Transverse colon (tissue), 4 donors: ENCODE measurements at regions of chr12 and their contacts with region 1.

Region 1: DNA sequence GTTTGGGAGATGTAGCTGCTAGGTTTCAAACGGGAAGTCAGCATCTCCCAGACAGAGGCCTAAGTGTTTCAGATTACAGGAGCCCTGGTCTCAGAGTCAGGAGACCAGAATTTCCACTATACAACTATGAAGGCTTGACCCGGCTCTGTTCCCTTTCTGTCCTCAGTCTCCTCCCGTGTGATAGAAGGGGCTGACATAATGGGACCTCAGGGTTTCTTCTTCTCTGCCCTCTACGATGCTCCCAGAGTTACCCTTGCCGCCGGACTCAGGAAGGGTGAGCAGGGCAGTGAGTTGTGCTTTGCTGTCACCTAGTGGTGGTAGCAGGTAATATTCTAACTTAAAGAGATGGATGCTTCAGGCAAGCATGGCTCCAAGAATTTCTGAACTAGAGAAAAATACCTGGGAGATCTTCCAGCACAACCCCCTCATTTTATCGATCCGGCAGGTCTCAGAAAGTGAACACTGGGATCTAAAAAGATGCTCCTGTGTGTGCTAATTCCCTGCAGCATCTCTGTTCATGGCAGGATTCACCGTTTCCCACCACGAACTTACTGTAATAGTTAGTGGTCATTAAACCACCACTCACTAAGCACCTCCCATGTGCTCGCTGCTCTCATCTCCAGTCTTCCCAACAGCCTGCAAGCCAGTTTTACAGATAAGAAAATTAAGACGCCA is 84.4 kb downstream of the VWF start:
- DNase-seq: peak; percentile 49
- H3K4me3 ChIP-seq: no peak overlapping the region
- H3K27ac ChIP-seq: no peak overlapping the region
- H3K4me1 ChIP-seq: no peaks in the 10 kb centered on the region
- H3K27me3 ChIP-seq: no peaks in the 10 kb centered on the region
- CTCF ChIP-seq: peak; percentile 86 to 93 (median 92)
- EP300 ChIP-seq: no peak
- POLR2A ChIP-seq: no peak

Region 2: DNA sequence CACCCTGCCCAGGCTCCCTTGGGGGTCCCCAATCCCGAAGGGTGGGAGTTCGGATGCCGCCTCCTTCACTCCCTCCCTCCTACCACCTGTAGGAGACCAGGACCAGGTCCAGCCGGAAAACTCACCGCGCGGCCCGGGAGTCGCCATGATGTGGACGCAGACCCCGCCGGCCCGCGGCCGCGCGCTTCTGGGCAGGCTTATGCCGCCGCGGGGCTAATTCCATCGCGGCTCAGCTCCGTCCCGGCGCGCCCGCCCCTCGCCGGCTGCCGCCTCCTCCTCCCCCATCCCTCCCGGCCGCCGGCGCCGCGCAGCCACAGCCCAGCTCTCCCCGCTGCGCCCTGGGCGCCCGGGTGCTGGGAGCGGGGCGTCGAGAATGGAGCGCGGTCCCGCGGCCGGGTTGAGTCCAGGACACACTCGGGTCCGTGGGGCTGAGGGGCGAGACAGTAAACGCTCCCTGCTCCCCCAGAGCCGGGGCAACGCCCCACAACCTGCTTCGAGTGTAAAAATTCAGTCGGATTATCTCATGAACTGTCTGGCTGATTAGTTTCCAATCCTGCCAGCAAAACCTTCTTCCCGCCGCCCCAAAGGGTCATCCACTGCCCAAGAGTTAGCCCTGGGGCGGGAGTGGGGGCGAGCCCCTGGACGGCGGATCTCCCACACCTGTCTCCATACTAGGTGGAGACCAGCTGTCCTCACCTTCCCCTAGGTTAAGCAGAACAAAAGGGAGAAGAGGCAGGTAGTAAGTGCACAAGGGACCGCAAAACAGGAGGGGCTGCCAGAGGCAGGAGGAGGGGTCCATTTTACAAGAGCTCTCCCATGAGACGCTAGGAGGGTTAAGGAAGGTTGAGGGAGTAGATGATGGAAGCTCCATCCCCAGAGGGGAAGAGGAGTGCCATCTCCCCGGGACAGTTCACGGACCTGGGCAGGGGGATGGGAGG is 94.7 kb before region 1 on chr12 and contains the start of gene ANO2:
- in situ Hi-C with region 1: no loop called
- intact Hi-C with region 1: no loop called
- DNase-seq: no peak
- H3K4me3 ChIP-seq: peak within 1 kb of the TSS in 3 of 4 donors; percentile 25 to 44 (median 29)
- H3K27ac ChIP-seq: no peak within 1 kb of the TSS
- H3K4me1 ChIP-seq: peaks cover 0 to 9% (median 8%) of the 10 kb centered on the region in 4 donors
- H3K27me3 ChIP-seq: peaks cover 49% of the 10 kb centered on the region
- CTCF ChIP-seq: no peak
- EP300 ChIP-seq: no peak
- POLR2A ChIP-seq: no peak
- total RNA-seq, gene ANO2: 1.4 to 3.3 (median 2.7) TPM in 3 of 4 donors, not detected in the other

Region 3: GRCh38 chr12:5988659-5989116 is 51.3 kb before region 1 on chr12:
- in situ Hi-C with region 1: loop called in 3 of 4 experiments (anchors 10 kb)
- intact Hi-C with region 1: loop called (anchors 1 kb)
- DNase-seq: peak; percentile 79
- H3K4me3 ChIP-seq: no peak overlapping the region
- H3K27ac ChIP-seq: peak overlapping the region in 2 of 4 donors; percentile 24 to 26
- H3K4me1 ChIP-seq: no peaks in the 10 kb centered on the region
- H3K27me3 ChIP-seq: no peaks in the 10 kb centered on the region
- CTCF ChIP-seq: peak; percentile 91 to 97 (median 96)
- EP300 ChIP-seq: no peak
- POLR2A ChIP-seq: no peak

Region 4: GRCh38 chr12:5996459-5996858 is 43.6 kb before region 1 on chr12:
- in situ Hi-C with region 1: loop called in 1 of 4 experiments (anchors 10 kb)
- intact Hi-C with region 1: no loop called
- DNase-seq: no peak
- H3K4me3 ChIP-seq: no peak overlapping the region
- H3K27ac ChIP-seq: no peak overlapping the region
- H3K4me1 ChIP-seq: no peaks in the 10 kb centered on the region
- H3K27me3 ChIP-seq: peaks cover 7% of the 10 kb centered on the region
- CTCF ChIP-seq: no peak
- EP300 ChIP-seq: no peak
- POLR2A ChIP-seq: no peak